Naive thymus-derived CD4-positive, alpha-beta T cell (primary cell): ENCODE measurements at regions of chr7 and their contacts with region 1.

Region 1: GRCh38 chr7:36852017-36852416 is 127.7 kb upstream of the AOAH start:
- DNase-seq: no peak
- ATAC-seq: no peak
- H3K4me3 ChIP-seq: no peak overlapping the region
- H3K4me3 Mint-ChIP-seq: peak overlapping the region in 1 of 10 donors; percentile 0
- H3K27ac ChIP-seq: no peak overlapping the region
- H3K27ac Mint-ChIP-seq: peak overlapping the region in 8 of 9 donors; percentile 4 to 88 (median 35)
- H3K4me1 ChIP-seq: peaks cover 0 to 12% of the 10 kb centered on the region in 2 donors
- H3K4me1 Mint-ChIP-seq: peaks cover 7 to 17% (median 13%) of the 10 kb centered on the region in 7 donors
- H3K27me3 ChIP-seq: no peaks in the 10 kb centered on the region
- H3K27me3 Mint-ChIP-seq: no peaks in the 10 kb centered on the region

Region 2: DNA sequence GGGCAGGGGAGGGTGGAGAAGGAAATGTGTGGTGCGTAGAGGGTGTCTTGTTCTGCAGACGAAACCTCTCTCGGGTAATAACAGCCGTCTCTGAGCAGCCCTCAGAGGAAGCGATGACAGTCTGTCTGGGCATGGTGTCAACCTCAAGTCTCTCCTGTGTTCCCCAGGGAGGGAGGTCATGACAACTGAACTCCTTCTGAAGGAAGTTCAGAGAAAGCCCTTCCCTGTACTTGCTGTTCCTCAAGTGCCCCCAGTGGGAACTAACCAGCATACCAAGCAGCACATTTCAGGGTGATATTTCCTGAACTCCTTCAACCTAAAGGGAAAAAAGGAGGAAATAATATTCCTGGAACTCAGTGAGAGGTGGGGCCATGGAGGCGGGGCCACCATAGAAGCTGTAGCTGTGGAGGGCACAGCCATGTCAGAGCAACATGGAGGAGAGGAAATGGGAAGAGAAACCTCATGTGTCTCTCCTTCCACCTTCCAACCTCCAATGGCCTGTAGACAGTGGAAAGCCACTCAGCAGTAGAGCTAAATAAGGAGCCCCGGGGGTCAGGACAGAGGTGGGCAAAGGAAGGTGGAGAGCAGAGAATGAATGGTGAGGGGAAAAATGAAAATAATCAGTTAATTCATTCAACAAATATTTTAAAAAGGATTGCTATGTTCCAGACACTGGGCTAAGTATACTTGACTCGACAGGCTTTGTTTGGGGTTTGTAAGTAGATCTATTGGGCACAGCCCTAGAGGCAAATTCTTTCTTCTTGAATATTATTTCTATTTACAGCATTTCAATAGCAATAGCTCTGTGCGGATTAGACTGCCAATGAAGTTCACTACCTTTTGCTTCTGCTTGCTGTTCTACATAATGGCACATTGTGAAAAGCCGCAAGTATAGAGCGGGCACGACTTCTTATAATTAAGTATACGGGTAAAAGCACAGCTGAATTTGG is 66.8 kb before region 1 on chr7:
- CTCF ChIA-PET with region 1: no interaction called
- POLR2A ChIA-PET with region 1: no interaction called
- intact Hi-C with region 1: loop called in 1 of 2 experiments (anchors 5 kb)
- DNase-seq: peak; percentile 23 to 87 (median 84)
- ATAC-seq: peak; percentile 89
- H3K4me3 ChIP-seq: no peak overlapping the region
- H3K4me3 Mint-ChIP-seq: peak overlapping the region; percentile 35 to 85 (median 69)
- H3K27ac ChIP-seq: peak overlapping the region; percentile 78
- H3K27ac Mint-ChIP-seq: peak overlapping the region; percentile 92 to 99 (median 97)
- H3K4me1 ChIP-seq: peaks cover 59 to 87% of the 10 kb centered on the region in 2 donors
- H3K4me1 Mint-ChIP-seq: peaks cover 61 to 95% (median 83%) of the 10 kb centered on the region in 7 donors
- H3K27me3 ChIP-seq: no peaks in the 10 kb centered on the region
- H3K27me3 Mint-ChIP-seq: no peaks in the 10 kb centered on the region